ENCODE measurements at regions of chrX and their contacts with region 1.

Region 1: GRCh38 chrX:123859846-123860838 is at the start of gene XIAP:
- DNase-seq: peak; percentile 91 to 94
- H3K4me3 ChIP-seq: peak within 1 kb of the TSS; percentile 64
- H3K27ac ChIP-seq: peak within 1 kb of the TSS; percentile 92
- H3K4me1 ChIP-seq: peaks cover 30% of the 10 kb centered on the region
- H3K27me3 ChIP-seq: no peaks in the 10 kb centered on the region
- CTCF ChIP-seq: no peak
- total RNA-seq, gene XIAP: 47.7 and 59.5 TPM in 2 replicates

Region 2: DNA sequence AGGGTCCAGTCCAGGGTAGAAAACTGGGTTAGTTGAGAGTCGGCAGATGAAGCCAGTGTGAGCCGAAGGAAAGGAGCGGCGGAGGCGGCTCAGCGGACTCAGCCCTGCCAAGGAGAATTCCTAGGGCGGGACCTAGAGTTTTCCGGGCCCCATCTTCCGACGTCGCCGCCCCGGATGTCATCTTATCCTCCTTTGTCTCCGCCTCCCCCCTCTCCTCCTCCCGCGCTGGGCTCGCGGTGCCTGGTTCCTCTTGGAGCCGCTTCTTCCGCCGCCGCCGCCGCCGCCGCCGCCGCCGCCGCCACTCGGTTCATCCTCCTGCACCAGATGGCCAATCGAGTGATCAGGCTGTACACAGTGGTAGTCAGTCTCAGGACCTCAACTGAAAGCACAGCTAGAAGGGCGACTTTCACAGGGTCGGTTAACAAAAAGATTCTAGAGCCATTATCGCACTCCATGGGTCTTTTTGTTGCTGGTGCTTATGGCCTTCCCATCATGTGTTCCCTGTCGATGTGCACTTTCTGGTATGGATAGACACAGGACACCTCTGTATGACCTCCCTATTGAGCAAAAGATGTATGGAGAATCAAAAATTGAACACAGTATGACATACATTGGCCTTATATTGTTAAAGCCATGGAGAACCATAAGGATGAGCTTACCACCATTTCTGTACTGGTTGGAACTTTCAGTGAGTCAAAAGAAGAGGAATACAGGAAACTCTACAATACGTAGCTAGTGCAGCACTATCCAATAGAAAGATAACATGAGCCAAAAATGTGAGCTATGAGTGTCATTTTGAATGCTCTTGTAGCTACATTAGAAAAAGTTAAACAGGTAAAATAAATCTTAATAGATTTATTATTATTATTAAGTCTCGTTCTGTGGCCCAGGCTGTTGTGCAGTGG is 94.9 kb before region 1 on chrX:
- CTCF ChIA-PET with region 1: interaction called, 11 read pairs
- POLR2A ChIA-PET with region 1: no interaction called
- intact Hi-C with region 1: no loop called
- DNase-seq: peak; percentile 82 to 90
- H3K4me3 ChIP-seq: peak overlapping the region; percentile 54
- H3K27ac ChIP-seq: peak overlapping the region; percentile 44
- H3K4me1 ChIP-seq: peaks cover 9% of the 10 kb centered on the region; the same call in 1 of the 2 replicates
- H3K27me3 ChIP-seq: no peaks in the 10 kb centered on the region
- CTCF ChIP-seq: no peak

Region 3: GRCh38 chrX:123803331-123803983 is 56.7 kb before region 1 on chrX:
- CTCF ChIA-PET with region 1: no interaction called
- POLR2A ChIA-PET with region 1: no interaction called
- intact Hi-C with region 1: loop called (anchors 1 kb)
- DNase-seq: peak; percentile 71 to 99
- H3K4me3 ChIP-seq: no peak overlapping the region
- H3K27ac ChIP-seq: peak overlapping the region; percentile 65
- H3K4me1 ChIP-seq: peaks cover 59% of the 10 kb centered on the region
- H3K27me3 ChIP-seq: no peaks in the 10 kb centered on the region
- CTCF ChIP-seq: no peak

Region 4: DNA sequence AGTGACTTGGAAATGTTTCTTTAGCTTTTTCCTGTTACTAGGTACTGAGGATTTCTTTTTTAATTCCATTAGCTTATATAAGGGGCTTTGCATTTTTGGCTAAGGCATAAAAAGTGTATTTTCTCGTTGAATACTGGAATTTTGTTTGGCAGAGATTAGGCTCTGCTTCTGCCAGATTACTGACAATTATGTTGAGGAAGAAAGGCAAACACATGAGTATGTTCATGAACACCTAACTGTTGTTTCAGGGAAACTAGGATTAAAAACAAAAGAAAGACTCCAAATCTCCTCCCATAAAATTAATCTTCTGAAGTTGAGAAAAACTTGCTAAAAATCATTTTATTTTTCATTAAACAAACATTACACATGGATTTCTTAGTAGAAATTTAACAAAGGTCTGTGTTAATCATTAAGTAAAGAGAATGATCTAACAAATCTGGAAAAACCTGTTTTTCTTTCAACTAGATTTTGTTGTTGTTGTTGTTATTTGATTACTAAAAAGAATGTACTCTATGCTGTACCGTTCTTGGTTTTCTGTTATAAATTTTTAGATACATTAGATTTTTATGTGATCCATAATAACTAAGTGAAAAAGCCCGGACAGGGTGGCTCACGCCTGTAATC is 58.1 kb after region 1 on chrX:
- CTCF ChIA-PET with region 1: interaction called, 19 read pairs
- POLR2A ChIA-PET with region 1: no interaction called
- intact Hi-C with region 1: no loop called
- DNase-seq: peak in 1 of 2 experiments; percentile 72
- H3K4me3 ChIP-seq: peak overlapping the region; percentile 29
- H3K27ac ChIP-seq: peak overlapping the region; percentile 84
- H3K4me1 ChIP-seq: peaks cover 38% of the 10 kb centered on the region
- H3K27me3 ChIP-seq: no peaks in the 10 kb centered on the region
- CTCF ChIP-seq: no peak

Region 5: DNA sequence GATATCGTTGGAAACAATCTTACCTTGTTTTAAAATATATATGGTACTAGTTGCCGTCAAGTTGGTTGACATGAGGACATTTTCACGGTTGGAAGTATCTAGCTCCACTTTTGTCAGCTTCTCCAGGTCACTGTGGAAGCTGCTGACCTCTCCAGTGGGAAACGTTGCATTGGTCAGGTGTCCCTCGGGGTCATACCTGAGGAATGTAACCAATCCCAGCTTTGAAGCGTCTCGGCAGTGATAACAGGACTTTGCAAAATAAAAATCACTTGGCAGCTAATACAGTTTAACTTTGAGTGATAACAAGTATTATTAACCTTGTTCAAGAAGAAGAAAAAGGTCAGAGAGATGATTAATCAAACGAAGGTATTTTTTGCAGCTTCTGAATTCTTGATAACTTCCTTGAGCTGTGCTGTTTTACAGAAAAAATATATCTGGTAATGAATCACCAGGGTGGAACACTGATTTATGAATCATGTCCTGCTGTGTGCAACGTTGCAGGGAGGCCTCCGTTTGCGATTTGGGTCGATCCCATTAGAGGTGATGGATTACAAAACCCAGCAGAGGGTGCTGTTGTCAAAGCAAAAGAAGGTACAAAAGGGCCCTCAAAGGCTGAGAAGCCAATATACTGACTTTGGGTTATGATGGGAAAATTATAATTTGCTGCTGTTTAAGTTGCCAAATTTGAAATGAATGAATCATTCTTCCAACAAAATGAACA is 546.3 kb after region 1 on chrX:
- CTCF ChIA-PET with region 1: no interaction called
- POLR2A ChIA-PET with region 1: no interaction called
- intact Hi-C with region 1: no loop called
- DNase-seq: peak; percentile 66 to 91
- H3K4me3 ChIP-seq: no peak overlapping the region
- H3K27ac ChIP-seq: 0 out of 2 replicates have a peak overlapping the region, but pooled peaks have one; percentile 2
- H3K4me1 ChIP-seq: peaks cover 7% of the 10 kb centered on the region
- H3K27me3 ChIP-seq: no peaks in the 10 kb centered on the region
- CTCF ChIP-seq: peak; percentile 83

Measured in PC-9 (cell line).